ENCODE measurements at regions of chr3 and their contacts with region 1.

Region 1: GRCh38 chr3:186821429-186822367 is 15.4 kb upstream of the RFC4 start:
- DNase-seq: no peak
- H3K4me3 ChIP-seq: no peak overlapping the region
- H3K27ac ChIP-seq: no peak overlapping the region
- H3K4me1 ChIP-seq: no peaks in the 10 kb centered on the region
- H3K27me3 ChIP-seq: peaks cover 21% of the 10 kb centered on the region
- CTCF ChIP-seq: peak; percentile 41

Region 2: DNA sequence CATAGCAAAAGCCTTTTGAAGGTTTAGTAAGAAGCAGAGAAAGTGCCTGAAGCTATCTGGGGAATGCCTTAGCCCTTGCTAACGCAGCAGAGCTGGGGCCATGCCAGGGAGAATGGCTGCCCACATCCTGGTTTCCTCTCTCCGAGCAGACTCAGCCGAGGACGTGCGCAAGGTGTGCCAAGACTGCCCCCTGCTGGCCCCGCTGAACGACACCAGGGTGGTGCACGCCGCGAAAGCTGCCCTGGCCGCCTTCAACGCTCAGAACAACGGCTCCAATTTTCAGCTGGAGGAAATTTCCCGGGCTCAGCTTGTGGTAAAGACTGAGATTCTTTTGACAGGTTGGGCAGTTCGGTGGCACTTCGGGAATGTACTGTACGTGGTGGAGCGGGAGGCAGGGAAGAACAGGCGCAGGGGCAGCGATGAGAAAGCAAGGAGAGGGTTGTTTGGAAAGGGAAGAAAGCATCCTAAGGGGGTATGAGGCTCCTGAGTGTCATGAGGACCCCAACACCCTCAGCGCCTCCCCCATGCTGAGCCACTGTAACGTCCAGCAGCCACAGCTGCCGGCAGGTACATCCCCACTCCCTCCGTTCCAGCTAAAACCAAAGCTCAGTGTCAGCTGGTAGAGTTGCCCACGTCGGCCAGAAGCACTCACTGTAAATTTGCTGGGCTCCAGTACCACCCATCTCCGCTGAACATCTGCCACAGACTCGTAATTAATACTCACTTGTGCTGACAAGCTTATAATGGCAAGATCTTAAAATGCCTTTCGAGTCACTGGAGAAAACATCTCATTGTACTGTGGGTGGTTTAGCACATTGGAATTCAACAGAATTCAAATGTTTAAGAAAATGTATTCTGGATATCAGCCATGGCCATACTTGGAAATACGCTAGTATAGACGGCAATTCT is 204.4 kb before region 1 on chr3:
- intact Hi-C with region 1: loop called (anchors 5 kb)
- DNase-seq: peak; percentile 78
- H3K4me3 ChIP-seq: no peak overlapping the region
- H3K27ac ChIP-seq: no peak overlapping the region
- H3K4me1 ChIP-seq: no peaks in the 10 kb centered on the region
- H3K27me3 ChIP-seq: peaks cover 9% of the 10 kb centered on the region
- CTCF ChIP-seq: peak; percentile 87

Region 3: DNA sequence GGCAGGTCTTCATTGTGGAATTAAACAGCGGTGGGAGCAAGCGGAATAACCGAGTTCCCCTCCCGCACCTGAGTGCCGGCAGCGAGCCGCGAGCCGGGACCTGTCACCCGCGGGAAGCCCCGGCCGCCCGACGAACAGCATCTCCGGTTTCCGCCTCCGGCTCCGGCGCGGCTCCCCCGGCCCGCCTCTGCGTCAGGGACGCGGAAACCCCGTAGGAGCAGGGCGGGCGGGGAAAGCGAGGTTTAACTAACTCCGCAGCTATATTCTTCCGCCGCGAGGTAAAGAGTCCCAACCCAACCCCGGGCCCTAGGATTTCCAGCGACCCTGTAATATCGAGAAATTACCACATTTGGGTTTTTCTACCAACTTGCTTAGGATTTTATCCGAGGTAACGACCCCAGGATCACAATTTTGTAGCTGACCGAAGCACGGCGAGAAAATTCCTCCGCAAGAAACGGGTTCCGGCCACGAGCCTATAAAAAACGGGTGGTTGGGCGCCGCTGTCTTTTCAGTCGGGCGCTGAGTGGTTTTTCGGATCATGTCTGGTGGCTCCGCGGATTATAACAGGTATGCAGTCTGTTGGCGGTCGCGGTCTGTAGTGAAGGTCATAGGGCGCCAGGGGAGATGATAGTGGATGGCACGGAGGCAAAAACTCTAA is 38.5 kb before region 1 on chr3 and contains the start of gene EIF4A2:
- intact Hi-C with region 1: no loop called
- DNase-seq: peak; percentile 91
- H3K4me3 ChIP-seq: peak within 1 kb of the TSS; percentile 77
- H3K27ac ChIP-seq: peak within 1 kb of the TSS; percentile 90
- H3K4me1 ChIP-seq: peaks cover 5% of the 10 kb centered on the region
- H3K27me3 ChIP-seq: no peaks in the 10 kb centered on the region
- CTCF ChIP-seq: no peak
- total RNA-seq, gene EIF4A2: 337 to 366 TPM